Naive thymus-derived CD4-positive, alpha-beta T cell (primary cell): ENCODE measurements at regions of chr2 and their contacts with region 1.

Region 1: DNA sequence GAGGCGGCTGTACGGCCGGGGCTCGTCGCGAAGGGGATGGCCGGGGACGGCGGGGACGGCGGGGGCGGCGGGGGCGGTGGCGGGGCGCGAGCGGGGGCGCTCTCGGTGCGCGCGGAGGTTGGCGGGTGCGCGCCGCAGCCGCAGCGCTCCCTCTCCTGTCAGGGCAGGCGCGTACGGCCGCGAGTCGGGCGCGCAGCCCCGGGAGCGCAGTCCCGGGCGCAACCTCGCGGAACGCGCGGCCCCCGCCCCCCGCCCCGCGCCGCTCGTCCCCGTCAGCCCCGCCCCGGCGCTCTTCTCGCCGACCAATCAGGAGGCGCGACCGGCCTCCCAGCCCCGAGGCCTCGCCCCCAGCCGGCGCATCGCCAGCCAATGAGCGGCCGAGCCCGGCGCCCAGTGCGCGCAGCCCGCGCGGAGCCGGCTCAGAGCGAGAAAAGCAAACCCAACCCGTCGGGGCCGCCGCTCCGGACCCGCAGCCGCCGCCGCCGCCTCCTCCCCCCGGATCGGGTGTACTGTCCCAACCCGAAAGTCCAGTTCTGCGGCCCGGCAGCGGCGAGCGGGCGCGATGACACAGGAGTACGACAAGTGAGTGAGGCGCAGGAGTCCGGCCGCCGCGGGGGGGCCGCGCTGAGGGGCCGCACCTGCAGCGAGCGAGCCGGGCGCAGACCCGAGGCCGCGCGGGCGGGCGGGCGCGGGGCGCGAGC is at the start of gene GRHL1:
- DNase-seq: peak; percentile 82 to 95 (median 90)
- ATAC-seq: peak; percentile 97
- H3K4me3 ChIP-seq: peak within 1 kb of the TSS; percentile 57
- H3K4me3 Mint-ChIP-seq: peak within 1 kb of the TSS; percentile 70 to 90 (median 86)
- H3K27ac ChIP-seq: peak within 1 kb of the TSS; percentile 63
- H3K27ac Mint-ChIP-seq: peak within 1 kb of the TSS in 7 of 9 donors; percentile 15 to 77 (median 56)
- H3K4me1 ChIP-seq: no peaks in the 10 kb centered on the region
- H3K4me1 Mint-ChIP-seq: peaks cover 0 to 13% (median 8%) of the 10 kb centered on the region in 7 donors
- H3K27me3 ChIP-seq: no peaks in the 10 kb centered on the region
- H3K27me3 Mint-ChIP-seq: peaks cover 19 to 77% (median 39%) of the 10 kb centered on the region in 5 donors
- total RNA-seq, gene GRHL1: 0.19 to 1.3 (median 0.56) TPM

Region 2: DNA sequence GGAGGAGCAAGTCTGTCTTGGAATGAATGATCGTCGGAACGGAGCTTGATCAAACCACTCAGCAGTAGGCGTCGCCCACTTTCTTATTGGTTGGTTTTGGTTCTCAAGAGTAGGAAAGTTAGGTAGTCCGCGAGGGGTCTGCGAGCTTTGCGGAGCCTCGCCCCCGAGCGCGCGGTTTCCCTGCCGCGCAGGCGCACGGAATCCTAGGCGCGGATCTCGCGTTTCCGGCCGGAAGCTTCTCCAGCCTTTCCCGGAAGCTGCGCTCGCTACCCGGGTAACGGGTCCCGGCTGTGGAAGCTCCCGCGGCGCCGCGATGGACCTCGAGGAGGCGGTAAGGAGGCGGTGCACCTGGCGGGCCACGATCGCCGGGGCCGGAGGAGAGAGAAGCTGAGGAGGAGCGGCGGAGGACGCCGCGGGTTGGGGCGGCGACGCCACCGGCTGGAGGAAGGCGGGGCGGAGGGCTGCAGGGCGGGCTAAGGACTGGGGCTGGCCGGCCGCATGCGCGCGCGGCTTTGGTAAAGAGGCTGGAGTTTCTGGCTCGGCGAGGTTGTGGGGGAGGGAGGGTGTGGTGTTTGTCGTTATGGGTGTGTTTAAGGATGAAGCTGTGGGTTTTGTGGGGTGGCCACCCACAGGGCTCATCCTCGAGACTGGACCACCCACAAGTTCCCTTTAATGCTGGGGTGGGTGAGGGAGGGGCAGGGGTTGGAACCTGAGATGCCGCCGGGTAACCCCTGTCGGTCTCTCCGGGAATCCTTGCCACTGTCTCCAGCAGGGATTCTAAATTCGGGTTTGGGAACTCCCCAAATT is 108.0 kb before region 1 on chr2 and contains the start of gene TAF1B:
- CTCF ChIA-PET with region 1: no interaction called
- POLR2A ChIA-PET with region 1: interaction called, 3 read pairs
- intact Hi-C with region 1: loop called (anchors 1 to 2 kb)
- DNase-seq: peak; percentile 55 to 89 (median 80)
- ATAC-seq: peak; percentile 87
- H3K4me3 ChIP-seq: peak within 1 kb of the TSS; percentile 85
- H3K4me3 Mint-ChIP-seq: peak within 1 kb of the TSS; percentile 89 to 95 (median 93)
- H3K27ac ChIP-seq: peak within 1 kb of the TSS; percentile 72
- H3K27ac Mint-ChIP-seq: peak within 1 kb of the TSS; percentile 74 to 97 (median 92)
- H3K4me1 ChIP-seq: peaks cover 11 to 13% of the 10 kb centered on the region in 2 donors
- H3K4me1 Mint-ChIP-seq: peaks cover 25 to 56% (median 48%) of the 10 kb centered on the region in 7 donors
- H3K27me3 ChIP-seq: no peaks in the 10 kb centered on the region
- H3K27me3 Mint-ChIP-seq: peaks cover 0 to 6% (median 0%) of the 10 kb centered on the region in 5 donors
- total RNA-seq, gene TAF1B: 9.2 to 28.2 (median 20.9) TPM